Calu3 (cell line): ENCODE measurements at regions of chr3 and their contacts with region 1.

Region 1: DNA sequence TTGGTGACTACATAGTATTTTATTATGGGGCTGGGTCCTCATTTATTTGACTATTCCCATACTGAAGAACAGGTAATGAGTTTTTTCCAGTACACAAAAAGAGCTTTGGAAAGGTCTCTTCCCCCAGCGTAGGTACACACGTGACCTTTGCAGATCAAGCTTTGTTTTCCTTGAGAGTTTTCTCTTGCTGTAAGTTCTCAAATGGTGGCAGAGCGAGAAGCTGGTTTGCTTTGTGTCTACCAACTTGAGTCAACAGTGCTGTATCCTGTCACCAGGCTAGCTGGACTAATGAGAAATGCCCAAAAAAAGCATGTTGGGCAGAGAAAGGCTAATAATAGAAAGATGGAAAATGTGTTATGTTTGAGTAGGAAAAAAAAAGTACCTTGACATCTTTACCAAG is 21.7 kb downstream of the GXYLT2 start:
- DNase-seq: no peak
- H3K4me3 Mint-ChIP-seq: no peak overlapping the region
- H3K27ac Mint-ChIP-seq: no peak overlapping the region
- H3K4me1 Mint-ChIP-seq: no peaks in the 10 kb centered on the region
- H3K27me3 Mint-ChIP-seq: peaks cover 20% of the 10 kb centered on the region
- CTCF ChIP-seq: no peak

Region 2: DNA sequence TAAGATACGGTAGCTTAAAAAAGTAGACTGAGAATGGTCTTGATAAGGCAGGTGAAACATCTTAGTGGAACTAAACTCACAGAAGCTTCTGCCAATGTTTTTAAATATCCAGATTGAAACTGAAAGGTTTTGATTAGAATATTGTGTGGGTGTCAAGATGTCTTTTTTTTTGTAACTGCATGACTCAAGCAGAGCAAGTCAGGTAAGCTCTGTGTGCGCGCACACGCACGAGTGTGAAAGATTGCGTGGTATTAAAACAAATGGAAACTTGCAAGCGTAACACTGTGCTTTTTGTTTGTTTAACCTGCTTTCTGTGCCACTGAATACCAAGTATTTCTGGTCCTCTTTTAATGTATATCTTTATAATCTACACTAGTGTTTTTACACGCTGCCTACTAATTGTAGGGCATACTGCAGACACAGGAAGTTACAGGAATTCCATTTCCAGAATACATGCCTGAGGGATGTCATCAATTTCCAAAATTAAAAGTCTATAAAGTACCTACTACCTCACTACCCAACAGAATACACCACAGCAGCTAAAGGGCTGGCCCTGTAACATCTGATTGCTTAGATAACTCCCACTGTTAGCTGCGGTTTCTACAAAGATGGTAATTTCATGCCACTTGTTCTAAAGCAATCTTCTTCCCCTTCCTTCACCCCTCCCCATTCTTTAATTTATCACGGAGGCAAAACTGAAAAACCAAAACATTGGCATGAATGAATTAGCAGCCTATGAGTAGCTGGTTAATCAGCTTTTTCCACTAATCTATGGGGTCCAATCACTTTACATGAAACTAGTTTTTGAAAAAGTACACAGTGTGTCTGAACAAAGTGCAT is 534.1 kb before region 1 on chr3:
- CTCF ChIA-PET with region 1: no interaction called
- intact Hi-C with region 1: no loop called
- DNase-seq: no peak
- H3K4me3 Mint-ChIP-seq: no peak overlapping the region
- H3K27ac Mint-ChIP-seq: no peak overlapping the region
- H3K4me1 Mint-ChIP-seq: no peaks in the 10 kb centered on the region
- H3K27me3 Mint-ChIP-seq: no peaks in the 10 kb centered on the region
- CTCF ChIP-seq: no peak

Region 3: GRCh38 chr3:73249047-73249446 is 339.5 kb after region 1 on chr3:
- CTCF ChIA-PET with region 1: interaction called, 10 read pairs
- intact Hi-C with region 1: no loop called
- DNase-seq: no peak
- H3K4me3 Mint-ChIP-seq: no peak overlapping the region
- H3K27ac Mint-ChIP-seq: no peak overlapping the region
- H3K4me1 Mint-ChIP-seq: peaks cover 17% of the 10 kb centered on the region
- H3K27me3 Mint-ChIP-seq: no peaks in the 10 kb centered on the region
- CTCF ChIP-seq: no peak